ENCODE measurements at regions of chr17 and their contacts with region 1.

Region 1: GRCh38 chr17:50478391-50479381 is at the start of gene RSAD1:
- DNase-seq: peak; percentile 87
- ATAC-seq: peak; percentile 81
- H3K4me3 ChIP-seq: peak within 1 kb of the TSS; percentile 78 to 91
- H3K27ac ChIP-seq: peak within 1 kb of the TSS; percentile 77
- H3K4me1 ChIP-seq: peaks cover 21 to 42% of the 10 kb centered on the region in 2 experiments
- H3K27me3 ChIP-seq: no peaks in the 10 kb centered on the region
- CTCF ChIP-seq: peak; percentile 91 to 97 (median 95)
- POLR2A ChIP-seq: peak; percentile 82
- RAD21 ChIP-seq: peak; percentile 70
- total RNA-seq, gene RSAD1: 82.7 TPM

Region 2: GRCh38 chr17:50200457-50201275 is 278.0 kb before region 1 on chr17:
- CTCF ChIA-PET with region 1: interaction called, 15 read pairs
- POLR2A ChIA-PET with region 1: no interaction called
- RAD21 ChIA-PET with region 1: interaction called, 4 to 5 read pairs
- intact Hi-C with region 1: loop called (anchors 2 kb)
- DNase-seq: peak; percentile 88
- ATAC-seq: peak; percentile 72
- H3K4me3 ChIP-seq: peak overlapping the region; percentile 71 to 75
- H3K27ac ChIP-seq: peak overlapping the region; percentile 45; the same call in 1 of the 2 replicates
- H3K4me1 ChIP-seq: peaks cover 10 to 39% of the 10 kb centered on the region in 2 experiments
- H3K27me3 ChIP-seq: no peaks in the 10 kb centered on the region
- CTCF ChIP-seq: peak; percentile 99 to 100 (median 100)
- POLR2A ChIP-seq: no peak
- RAD21 ChIP-seq: peak; percentile 100

Region 3: GRCh38 chr17:50266303-50267073 is 212.2 kb before region 1 on chr17:
- CTCF ChIA-PET with region 1: no interaction called
- POLR2A ChIA-PET with region 1: no interaction called
- RAD21 ChIA-PET with region 1: no interaction called
- intact Hi-C with region 1: no loop called
- DNase-seq: no peak
- ATAC-seq: peak; percentile 26; the same call in 1 of the 2 replicates
- H3K4me3 ChIP-seq: no peak overlapping the region
- H3K27ac ChIP-seq: peak overlapping the region; percentile 17; the same call in 1 of the 2 replicates
- H3K4me1 ChIP-seq: peaks cover 22 to 30% of the 10 kb centered on the region in 2 experiments
- H3K27me3 ChIP-seq: no peaks in the 10 kb centered on the region
- CTCF ChIP-seq: no peak
- POLR2A ChIP-seq: no peak
- RAD21 ChIP-seq: no peak

Region 4: GRCh38 chr17:50361561-50362480 is 116.9 kb before region 1 on chr17:
- CTCF ChIA-PET with region 1: interaction called, 33 read pairs
- POLR2A ChIA-PET with region 1: interaction called, 12 read pairs
- RAD21 ChIA-PET with region 1: interaction called in 1 of 2 experiments, 3 read pairs
- intact Hi-C with region 1: loop called (anchors 1 kb)
- DNase-seq: peak; percentile 60
- ATAC-seq: peak; percentile 83
- H3K4me3 ChIP-seq: no peak overlapping the region
- H3K27ac ChIP-seq: peak overlapping the region; percentile 16
- H3K4me1 ChIP-seq: peaks cover 3 to 8% of the 10 kb centered on the region in 2 experiments; a peak in 2 of 4 replicates
- H3K27me3 ChIP-seq: no peaks in the 10 kb centered on the region
- CTCF ChIP-seq: peak; percentile 87 to 97 (median 94)
- POLR2A ChIP-seq: no peak
- RAD21 ChIP-seq: no peak; the same call in 1 of the 2 replicates

Region 5: GRCh38 chr17:50425682-50426471 is 52.8 kb before region 1 on chr17 and contains the start of gene ACSF2:
- CTCF ChIA-PET with region 1: no interaction called
- POLR2A ChIA-PET with region 1: no interaction called
- RAD21 ChIA-PET with region 1: no interaction called
- intact Hi-C with region 1: loop called (anchors 1 kb)
- DNase-seq: no peak
- ATAC-seq: peak; percentile 76
- H3K4me3 ChIP-seq: peak within 1 kb of the TSS; percentile 63 to 73
- H3K27ac ChIP-seq: peak within 1 kb of the TSS; percentile 73
- H3K4me1 ChIP-seq: peaks cover 31 to 50% of the 10 kb centered on the region in 2 experiments
- H3K27me3 ChIP-seq: no peaks in the 10 kb centered on the region
- CTCF ChIP-seq: no peak
- POLR2A ChIP-seq: no peak
- RAD21 ChIP-seq: no peak
- total RNA-seq, gene ACSF2: 52.4 TPM

Region 6: GRCh38 chr17:50534222-50534978 is 55.7 kb after region 1 on chr17:
- CTCF ChIA-PET with region 1: interaction called, 3 read pairs
- POLR2A ChIA-PET with region 1: interaction called, 3 read pairs
- RAD21 ChIA-PET with region 1: interaction called in 1 of 2 experiments, 3 read pairs
- intact Hi-C with region 1: loop called (anchors 2 kb)
- DNase-seq: peak; percentile 55
- ATAC-seq: peak; percentile 88
- H3K4me3 ChIP-seq: peak overlapping the region; percentile 45 to 75
- H3K27ac ChIP-seq: peak overlapping the region; percentile 73
- H3K4me1 ChIP-seq: peaks cover 39 to 50% of the 10 kb centered on the region in 2 experiments
- H3K27me3 ChIP-seq: no peaks in the 10 kb centered on the region
- CTCF ChIP-seq: peak in 2 of 3 experiments; percentile 68 to 83; a peak in 4 of 6 replicates
- POLR2A ChIP-seq: peak; percentile 23
- RAD21 ChIP-seq: no peak

Region 7: GRCh38 chr17:50547035-50547735 is 68.5 kb after region 1 on chr17 and contains the start of gene SPATA20:
- CTCF ChIA-PET with region 1: interaction called, 11 read pairs
- POLR2A ChIA-PET with region 1: interaction called, 12 read pairs
- RAD21 ChIA-PET with region 1: interaction called, 3 to 4 read pairs
- intact Hi-C with region 1: loop called (anchors 1 kb)
- DNase-seq: peak; percentile 80
- ATAC-seq: peak; percentile 75
- H3K4me3 ChIP-seq: peak within 1 kb of the TSS; percentile 65 to 85
- H3K27ac ChIP-seq: peak within 1 kb of the TSS; percentile 75
- H3K4me1 ChIP-seq: peaks cover 27 to 58% of the 10 kb centered on the region in 2 experiments
- H3K27me3 ChIP-seq: no peaks in the 10 kb centered on the region
- CTCF ChIP-seq: peak in 2 of 3 experiments; percentile 98 to 100; a peak in 4 of 6 replicates
- POLR2A ChIP-seq: peak; percentile 79
- RAD21 ChIP-seq: no peak
- total RNA-seq, gene SPATA20: 57.5 TPM

Region 8: DNA sequence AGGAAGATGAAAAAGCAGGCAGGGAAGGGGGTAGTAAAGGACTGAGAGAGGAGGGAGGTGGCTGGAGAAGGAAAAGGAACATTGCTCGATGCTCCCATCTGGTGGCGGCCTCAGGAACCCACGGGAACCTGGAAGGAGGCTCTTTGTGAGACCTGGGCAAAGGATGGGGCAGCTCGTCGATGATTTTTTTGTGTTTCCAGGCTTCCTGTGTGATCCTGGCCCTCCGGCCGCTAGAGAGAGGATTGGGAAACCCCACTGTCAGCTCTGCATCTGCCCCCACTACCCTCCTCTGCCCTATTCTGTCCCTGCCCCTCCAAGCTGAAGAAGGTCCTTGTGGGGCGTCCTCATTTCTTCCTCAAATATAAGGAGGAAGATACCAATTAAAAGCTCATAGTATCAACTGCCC is 363.3 kb after region 1 on chr17:
- CTCF ChIA-PET with region 1: interaction called, 4 read pairs
- POLR2A ChIA-PET with region 1: no interaction called
- RAD21 ChIA-PET with region 1: interaction called, 3 to 4 read pairs
- intact Hi-C with region 1: loop called (anchors 2 kb)
- DNase-seq: peak; percentile 61
- ATAC-seq: peak; percentile 95
- H3K4me3 ChIP-seq: no peak overlapping the region
- H3K27ac ChIP-seq: no peak overlapping the region
- H3K4me1 ChIP-seq: peaks cover 0 to 22% of the 10 kb centered on the region in 2 experiments; a peak in 2 of 4 replicates
- H3K27me3 ChIP-seq: no peaks in the 10 kb centered on the region
- CTCF ChIP-seq: peak; percentile 94 to 97 (median 97)
- POLR2A ChIP-seq: no peak
- RAD21 ChIP-seq: peak; percentile 96

Measured in HCT116 (cell line).